Panc1 (cell line): ENCODE measurements at regions of chr4 and their contacts with region 1.

Region 1: DNA sequence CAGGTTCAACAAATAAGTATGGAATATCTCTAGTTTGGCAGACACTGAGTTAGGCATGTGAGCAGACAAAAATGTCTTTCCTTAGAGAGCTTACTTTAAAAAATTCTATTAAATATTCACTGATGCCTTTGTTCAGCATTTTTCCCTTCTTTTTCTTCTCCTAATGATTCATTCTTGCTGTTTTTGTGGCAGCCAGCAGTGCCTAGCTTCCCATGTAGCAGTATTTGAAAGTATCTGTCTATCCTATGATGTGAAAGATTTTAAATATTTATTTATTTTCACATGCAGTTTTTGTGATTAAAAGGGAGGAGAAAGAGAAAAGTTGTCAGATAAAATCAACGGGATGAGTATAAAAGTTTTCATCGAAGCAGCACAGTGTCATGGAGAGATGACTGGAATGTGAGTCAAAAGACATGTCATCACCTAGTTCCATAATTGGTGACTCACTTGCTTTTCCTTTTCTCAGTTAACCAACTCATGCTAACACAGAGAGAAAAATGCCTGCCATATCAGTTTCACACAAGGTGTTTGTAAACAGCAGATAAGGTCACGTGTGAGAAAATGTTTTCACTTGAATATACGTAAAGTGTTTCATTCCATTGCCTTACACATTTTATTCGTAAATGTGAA is 69.8 kb downstream of the BMPR1B start:
- DNase-seq: peak; percentile 70
- ATAC-seq: no peak
- H3K4me3 ChIP-seq: no peak overlapping the region
- H3K27ac ChIP-seq: no peak overlapping the region
- H3K4me1 ChIP-seq: no peaks in the 10 kb centered on the region
- H3K27me3 ChIP-seq: no peaks in the 10 kb centered on the region
- CTCF ChIP-seq: no peak

Region 2: DNA sequence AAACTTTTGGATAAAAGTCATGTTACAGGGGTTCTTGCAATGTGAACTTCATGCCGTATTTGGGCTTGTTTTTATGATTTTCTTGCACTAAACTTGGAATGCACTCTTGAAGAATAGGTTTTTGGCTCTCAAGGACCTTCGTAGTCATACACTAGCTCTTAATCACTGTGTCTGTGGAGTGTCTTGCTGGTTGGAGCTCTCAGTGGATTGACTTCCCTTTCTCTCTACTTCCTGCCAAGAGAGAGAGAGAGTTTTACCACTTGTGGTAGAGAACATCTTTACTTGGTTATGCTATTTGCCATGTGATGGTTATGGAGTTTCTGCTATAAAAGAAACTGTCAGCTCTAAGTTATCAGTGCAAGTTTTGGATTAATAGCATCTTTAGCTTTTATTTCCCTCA is 42.5 kb after region 1 on chr4:
- CTCF ChIA-PET with region 1: interaction called, 15 read pairs
- POLR2A ChIA-PET with region 1: no interaction called
- in situ Hi-C with region 1: no loop called
- intact Hi-C with region 1: no loop called
- DNase-seq: no peak
- ATAC-seq: no peak
- H3K4me3 ChIP-seq: no peak overlapping the region
- H3K27ac ChIP-seq: no peak overlapping the region
- H3K4me1 ChIP-seq: no peaks in the 10 kb centered on the region
- H3K27me3 ChIP-seq: no peaks in the 10 kb centered on the region
- CTCF ChIP-seq: no peak